ENCODE measurements at regions of chr5 and their contacts with region 1.

Region 1: GRCh38 chr5:6632917-6633468 is at the starts of genes NSUN2 and SRD5A1:
- DNase-seq: peak; percentile 90 to 95
- ATAC-seq: peak; percentile 97 to 98 (median 97)
- H3K4me3 ChIP-seq: peak within 1 kb of the TSS; percentile 79
- H3K27ac ChIP-seq: peak within 1 kb of the TSS; percentile 98
- H3K4me1 ChIP-seq: peaks cover 17% of the 10 kb centered on the region
- H3K27me3 ChIP-seq: no peaks in the 10 kb centered on the region
- CTCF ChIP-seq: no peak
- total RNA-seq, gene NSUN2: 30.6 to 53.9 (median 50.6) TPM
- total RNA-seq, gene SRD5A1: 1.1 to 2.4 (median 1.5) TPM

Region 2: GRCh38 chr5:6704361-6704851 is 71.4 kb after region 1 on chr5:
- intact Hi-C with region 1: loop called in 1 of 2 experiments (anchors 5 kb)
- DNase-seq: peak; percentile 65 to 88
- ATAC-seq: peak; percentile 90 to 99 (median 98)
- H3K4me3 ChIP-seq: peak overlapping the region; percentile 3
- H3K27ac ChIP-seq: peak overlapping the region; percentile 84
- H3K4me1 ChIP-seq: peaks cover 23% of the 10 kb centered on the region
- H3K27me3 ChIP-seq: no peaks in the 10 kb centered on the region
- CTCF ChIP-seq: no peak

Region 3: DNA sequence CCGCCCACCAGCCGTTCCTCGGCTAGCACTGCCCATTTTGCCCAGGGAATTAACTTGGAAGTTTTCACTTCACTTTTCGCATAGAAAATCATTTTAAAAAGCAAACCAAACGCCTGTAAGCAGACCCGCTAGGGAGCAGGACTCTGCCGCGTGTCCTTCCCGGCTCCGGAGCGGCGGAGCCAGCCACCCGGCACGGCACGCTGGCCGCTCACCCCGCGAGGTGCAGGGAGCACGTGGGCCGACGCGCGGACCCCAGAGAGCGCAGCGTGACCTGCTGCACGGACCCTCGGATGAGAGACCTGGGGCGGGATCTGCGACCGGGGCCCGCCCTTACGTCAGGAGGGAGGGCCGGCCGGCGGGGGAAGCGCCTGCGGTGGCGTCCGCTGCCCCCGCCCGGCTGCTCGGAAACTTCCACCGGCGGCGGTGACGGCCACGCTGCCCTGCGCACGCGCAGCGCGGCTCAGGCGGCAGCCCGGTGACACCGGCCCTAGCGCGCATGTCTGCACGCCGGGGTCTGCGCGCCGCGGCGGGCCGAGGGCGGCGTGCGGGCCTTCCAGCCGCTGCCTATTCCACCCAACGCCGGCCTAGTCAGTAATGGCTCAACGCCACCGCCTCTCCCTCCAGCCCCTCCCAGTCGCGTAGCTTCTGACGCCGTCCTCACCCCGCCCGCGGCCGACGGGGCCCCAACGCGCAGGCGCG is 79.7 kb after region 1 on chr5:
- intact Hi-C with region 1: loop called (anchors 2 to 5 kb)
- DNase-seq: peak; percentile 97 to 99
- ATAC-seq: peak; percentile 84 to 87 (median 85)
- H3K4me3 ChIP-seq: peak overlapping the region; percentile 91
- H3K27ac ChIP-seq: peak overlapping the region; percentile 99
- H3K4me1 ChIP-seq: peaks cover 36% of the 10 kb centered on the region
- H3K27me3 ChIP-seq: no peaks in the 10 kb centered on the region
- CTCF ChIP-seq: no peak

Region 4: DNA sequence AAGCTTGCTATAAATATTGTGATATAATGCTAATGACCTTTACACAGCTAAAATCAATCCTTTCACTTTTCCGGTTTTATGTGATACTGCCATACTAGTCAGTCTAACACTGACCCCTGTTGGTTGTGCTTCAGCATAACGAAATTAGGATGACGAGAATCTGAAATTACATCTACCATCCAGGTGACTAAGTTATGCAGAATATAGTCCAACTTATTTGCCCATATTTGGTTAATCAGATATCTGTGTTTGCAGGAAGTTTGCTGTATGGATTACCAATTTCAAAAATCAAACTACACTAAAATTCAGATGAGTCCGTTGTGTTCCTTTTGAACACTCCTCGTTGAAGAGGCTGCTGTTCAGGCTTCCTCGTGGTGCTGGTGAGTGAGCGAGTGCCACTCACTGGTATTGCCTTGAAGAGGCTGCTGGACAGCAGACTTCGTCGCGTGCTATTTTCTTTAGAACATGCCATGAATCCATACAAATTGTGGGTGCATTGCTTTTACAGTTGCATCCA is 112.8 kb after region 1 on chr5:
- intact Hi-C with region 1: loop called (anchors 2 to 5 kb)
- DNase-seq: no peak
- ATAC-seq: peak; percentile 54 to 88 (median 75)
- H3K4me3 ChIP-seq: no peak overlapping the region
- H3K27ac ChIP-seq: peak overlapping the region; percentile 14
- H3K4me1 ChIP-seq: peaks cover 6% of the 10 kb centered on the region
- H3K27me3 ChIP-seq: no peaks in the 10 kb centered on the region
- CTCF ChIP-seq: peak; percentile 76

Region 5: DNA sequence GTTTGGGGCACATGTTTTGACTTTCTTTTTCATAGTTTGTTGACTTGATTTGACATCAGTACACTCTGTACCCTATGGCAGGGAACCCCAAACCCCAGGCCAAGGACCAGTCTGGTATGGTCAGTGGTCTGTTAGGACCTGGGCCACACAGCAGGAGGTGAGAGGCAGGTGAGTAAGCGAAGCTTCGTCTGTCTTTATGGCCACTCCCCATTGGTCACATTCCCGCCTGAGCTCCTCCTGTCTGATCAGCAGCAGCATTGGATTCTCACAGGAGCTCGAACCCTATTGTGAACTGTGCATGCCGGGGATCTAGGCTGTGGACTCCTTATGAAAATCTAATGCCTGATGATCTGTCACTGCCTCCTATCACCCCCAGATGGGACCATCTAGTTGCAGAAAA is 168.2 kb after region 1 on chr5:
- intact Hi-C with region 1: no loop called
- DNase-seq: no peak
- ATAC-seq: no peak
- H3K4me3 ChIP-seq: no peak overlapping the region
- H3K27ac ChIP-seq: no peak overlapping the region
- H3K4me1 ChIP-seq: no peaks in the 10 kb centered on the region
- H3K27me3 ChIP-seq: no peaks in the 10 kb centered on the region
- CTCF ChIP-seq: no peak

Region 6: GRCh38 chr5:6837519-6838110 is 204.6 kb after region 1 on chr5:
- intact Hi-C with region 1: loop called in 1 of 2 experiments (anchors 10 kb)
- DNase-seq: no peak
- ATAC-seq: no peak
- H3K4me3 ChIP-seq: no peak overlapping the region
- H3K27ac ChIP-seq: no peak overlapping the region
- H3K4me1 ChIP-seq: peaks cover 11% of the 10 kb centered on the region
- H3K27me3 ChIP-seq: no peaks in the 10 kb centered on the region
- CTCF ChIP-seq: peak; percentile 40

Measured in psoas muscle (tissue), 8 donors.